A673 (cell line): ENCODE measurements at regions of chr6 and their contacts with region 1.

Region 1: GRCh38 chr6:139016337-139017213 is 12.0 kb upstream of the ABRACL start:
- DNase-seq: no peak
- H3K4me3 ChIP-seq: no peak overlapping the region
- H3K27ac ChIP-seq: no peak overlapping the region
- H3K4me1 ChIP-seq: no peaks in the 10 kb centered on the region
- H3K27me3 ChIP-seq: no peaks in the 10 kb centered on the region
- CTCF ChIP-seq: no peak

Region 2: DNA sequence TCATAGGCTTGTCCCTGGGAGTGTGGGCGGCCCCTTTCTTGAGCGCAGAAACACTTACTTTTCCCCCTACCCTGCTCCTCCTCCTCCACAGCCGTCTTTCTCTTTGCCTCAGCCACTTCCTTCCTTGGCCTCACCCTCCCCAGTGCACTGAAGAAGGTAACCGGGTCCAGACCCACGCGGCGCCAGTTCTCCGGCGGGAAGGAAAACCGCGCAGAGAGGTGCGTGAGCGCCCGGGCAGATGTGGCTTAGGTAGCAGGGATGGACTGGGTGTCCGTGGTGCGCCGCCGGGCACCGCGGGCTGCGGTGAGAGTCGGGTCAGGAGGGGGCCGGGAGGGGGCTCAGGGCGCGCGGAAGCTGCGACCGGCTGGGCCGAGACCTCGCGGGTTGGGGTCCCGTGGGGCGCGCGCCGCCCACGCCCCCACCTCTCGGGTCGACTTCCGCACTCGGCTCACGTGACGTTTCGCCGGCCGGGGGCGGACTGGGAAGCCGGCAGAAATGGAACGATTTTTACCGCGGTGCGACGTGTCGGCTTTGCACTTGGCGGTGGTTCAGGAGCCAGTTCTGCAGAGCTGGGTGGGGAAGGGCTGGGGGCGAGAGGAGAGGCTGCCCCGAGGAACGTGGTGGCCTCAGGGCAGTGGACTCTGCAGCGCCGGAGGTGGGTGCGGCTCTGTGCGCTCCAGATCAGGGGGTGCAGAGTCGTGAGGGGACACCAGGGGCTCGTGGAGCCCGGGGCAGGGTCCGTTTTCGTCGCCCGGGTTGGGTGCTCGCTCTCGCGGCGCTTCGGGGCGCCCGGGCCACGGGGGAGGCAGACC is 12.3 kb after region 1 on chr6 and contains the start of gene ABRACL:
- CTCF ChIA-PET with region 1: no interaction called
- POLR2A ChIA-PET with region 1: interaction called, 19 read pairs
- intact Hi-C with region 1: no loop called
- DNase-seq: peak; percentile 86
- H3K4me3 ChIP-seq: peak within 1 kb of the TSS; percentile 77
- H3K27ac ChIP-seq: peak within 1 kb of the TSS; percentile 81
- H3K4me1 ChIP-seq: peaks cover 19% of the 10 kb centered on the region
- H3K27me3 ChIP-seq: no peaks in the 10 kb centered on the region
- CTCF ChIP-seq: no peak
- total RNA-seq, gene ABRACL: 65.9 and 98.5 TPM in 2 replicates